ENCODE measurements at regions of chr1 and their contacts with region 1.

Region 1: DNA sequence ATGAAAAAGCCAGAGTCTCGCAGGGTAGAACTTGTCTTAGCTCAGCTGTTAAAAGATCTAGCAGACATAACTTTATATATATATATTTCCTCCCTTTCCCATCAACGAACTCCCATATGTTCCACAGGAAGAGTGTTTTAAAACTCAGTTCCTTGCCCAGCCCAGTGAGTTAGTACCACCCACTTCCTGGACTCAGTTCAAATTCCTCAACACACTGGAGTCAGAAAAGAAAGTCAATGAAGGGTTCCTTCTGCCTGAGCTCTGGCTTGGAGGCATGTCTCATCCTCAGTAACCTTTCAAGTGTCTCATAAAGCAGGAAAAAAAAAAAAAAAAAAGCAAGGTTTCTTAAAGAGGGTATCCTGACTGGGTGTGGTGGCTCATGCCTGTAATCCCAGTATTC is 15.6 kb downstream of the TPM3 start:
- DNase-seq: no peak
- H3K4me3 ChIP-seq: no peak overlapping the region
- H3K27ac ChIP-seq: no peak overlapping the region
- H3K4me1 ChIP-seq: peaks cover 8 to 17% (median 13%) of the 10 kb centered on the region in 4 experiments; a peak in 6 of 7 replicates
- H3K27me3 ChIP-seq: no peaks in the 10 kb centered on the region
- CTCF ChIP-seq: no peak
- EP300 ChIP-seq: no peak
- POLR2A ChIP-seq: no peak
- RAD21 ChIP-seq: no peak

Region 2: GRCh38 chr1:154081386-154082126 is 94.8 kb before region 1 on chr1:
- CTCF ChIA-PET with region 1: no interaction called
- POLR2A ChIA-PET with region 1: no interaction called
- DNase-seq: no peak
- H3K4me3 ChIP-seq: no peak overlapping the region
- H3K27ac ChIP-seq: no peak overlapping the region
- H3K4me1 ChIP-seq: no peaks in the 10 kb centered on the region
- H3K27me3 ChIP-seq: no peaks in the 10 kb centered on the region
- CTCF ChIP-seq: no peak
- EP300 ChIP-seq: no peak
- POLR2A ChIP-seq: no peak
- RAD21 ChIP-seq: no peak

Region 3: GRCh38 chr1:154093699-154094098 is 82.6 kb before region 1 on chr1:
- CTCF ChIA-PET with region 1: no interaction called
- POLR2A ChIA-PET with region 1: no interaction called
- DNase-seq: no peak
- H3K4me3 ChIP-seq: no peak overlapping the region
- H3K27ac ChIP-seq: no peak overlapping the region
- H3K4me1 ChIP-seq: no peaks in the 10 kb centered on the region
- H3K27me3 ChIP-seq: no peaks in the 10 kb centered on the region
- CTCF ChIP-seq: no peak
- EP300 ChIP-seq: no peak
- POLR2A ChIP-seq: no peak
- RAD21 ChIP-seq: no peak

Region 4: GRCh38 chr1:154157520-154158306 is 18.6 kb before region 1 on chr1:
- CTCF ChIA-PET with region 1: no interaction called
- POLR2A ChIA-PET with region 1: interaction called, 19 read pairs
- DNase-seq: no peak
- H3K4me3 ChIP-seq: no peak overlapping the region
- H3K27ac ChIP-seq: 0 out of 2 replicates have a peak overlapping the region, but pooled peaks have one; percentile 10
- H3K4me1 ChIP-seq: peaks cover 0 to 3% (median 0%) of the 10 kb centered on the region in 4 experiments; a peak in 1 of 7 replicates
- H3K27me3 ChIP-seq: no peaks in the 10 kb centered on the region
- CTCF ChIP-seq: no peak
- EP300 ChIP-seq: no peak
- POLR2A ChIP-seq: no peak
- RAD21 ChIP-seq: no peak

Region 5: DNA sequence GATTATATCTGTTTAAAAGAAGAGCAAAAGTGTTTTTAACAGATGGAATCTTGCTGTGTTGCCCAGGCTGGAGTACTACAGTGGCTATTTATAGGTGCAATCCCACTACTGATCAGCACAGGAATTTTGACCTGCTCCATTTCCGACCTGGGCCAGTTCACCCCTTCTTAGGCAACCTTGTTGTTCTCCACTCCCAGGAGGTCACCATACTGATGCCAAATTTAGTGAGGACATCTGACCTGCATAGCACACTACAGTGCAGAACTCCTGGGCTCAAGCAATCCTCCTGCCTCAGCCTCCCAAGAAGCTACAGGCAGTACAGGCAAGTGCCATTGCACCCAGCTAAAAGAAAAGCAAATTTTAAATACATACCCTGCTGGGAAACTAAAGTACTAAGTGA is 10.1 kb before region 1 on chr1:
- CTCF ChIA-PET with region 1: no interaction called
- POLR2A ChIA-PET with region 1: interaction called, 11 read pairs
- DNase-seq: no peak
- H3K4me3 ChIP-seq: no peak overlapping the region
- H3K27ac ChIP-seq: no peak overlapping the region
- H3K4me1 ChIP-seq: no peaks in the 10 kb centered on the region
- H3K27me3 ChIP-seq: no peaks in the 10 kb centered on the region
- CTCF ChIP-seq: no peak
- EP300 ChIP-seq: no peak
- POLR2A ChIP-seq: no peak
- RAD21 ChIP-seq: no peak